ENCODE measurements at regions of chr5 and their contacts with region 1.

Region 1: GRCh38 chr5:31322946-31323345 is 129.5 kb downstream of the CDH6 start:
- DNase-seq: no peak
- H3K4me3 ChIP-seq: no peak overlapping the region
- H3K27ac ChIP-seq: no peak overlapping the region
- H3K4me1 ChIP-seq: no peaks in the 10 kb centered on the region
- H3K27me3 ChIP-seq: no peaks in the 10 kb centered on the region
- CTCF ChIP-seq: no peak
- POLR2A ChIP-seq: no peak

Region 2: GRCh38 chr5:31209341-31209740 is 113.6 kb before region 1 on chr5:
- intact Hi-C with region 1: loop called (anchors 5 kb)
- DNase-seq: no peak
- H3K4me3 ChIP-seq: no peak overlapping the region
- H3K27ac ChIP-seq: no peak overlapping the region
- H3K4me1 ChIP-seq: no peaks in the 10 kb centered on the region
- H3K27me3 ChIP-seq: no peaks in the 10 kb centered on the region
- CTCF ChIP-seq: no peak
- POLR2A ChIP-seq: no peak